ENCODE measurements at regions of chr20 and their contacts with region 1.

Region 1: GRCh38 chr20:24163506-24163905 is 174.9 kb upstream of the GGTLC1 start:
- DNase-seq: no peak
- ATAC-seq: no peak
- H3K4me3 Mint-ChIP-seq: no peak overlapping the region
- H3K27ac Mint-ChIP-seq: no peak overlapping the region
- H3K4me1 Mint-ChIP-seq: peaks cover 2% of the 10 kb centered on the region
- H3K27me3 Mint-ChIP-seq: no peaks in the 10 kb centered on the region

Region 2: GRCh38 chr20:24051160-24051559 is 112.3 kb before region 1 on chr20:
- CTCF ChIA-PET with region 1: no interaction called
- POLR2A ChIA-PET with region 1: no interaction called
- DNase-seq: no peak
- ATAC-seq: no peak
- H3K4me3 Mint-ChIP-seq: no peak overlapping the region
- H3K27ac Mint-ChIP-seq: peak overlapping the region; percentile 53
- H3K4me1 Mint-ChIP-seq: peaks cover 41% of the 10 kb centered on the region
- H3K27me3 Mint-ChIP-seq: peaks cover 1% of the 10 kb centered on the region

Region 3: GRCh38 chr20:24146231-24146634 is 17.3 kb before region 1 on chr20:
- CTCF ChIA-PET with region 1: interaction called, 10 read pairs
- POLR2A ChIA-PET with region 1: no interaction called
- DNase-seq: no peak
- ATAC-seq: no peak
- H3K4me3 Mint-ChIP-seq: no peak overlapping the region
- H3K27ac Mint-ChIP-seq: no peak overlapping the region
- H3K4me1 Mint-ChIP-seq: peaks cover 38% of the 10 kb centered on the region
- H3K27me3 Mint-ChIP-seq: peaks cover 15% of the 10 kb centered on the region

Measured in activated CD8-positive, alpha-beta T cell treated with anti-CD3 and anti-CD28 coated beads, Interleukin-2, amount 10 ng/mL, durations not matched to agents 7 days and 5 days (primary cell).